ENCODE measurements at regions of chr4 and their contacts with region 1.

Region 1: GRCh38 chr4:39527273-39528060 is at the start of gene UGDH:
- DNase-seq: peak; percentile 73 to 96 (median 89)
- ATAC-seq: peak; percentile 98
- H3K4me3 ChIP-seq: peak within 1 kb of the TSS; percentile 98
- H3K4me3 Mint-ChIP-seq: peak within 1 kb of the TSS; percentile 98
- H3K27ac ChIP-seq: peak within 1 kb of the TSS; percentile 52 to 65
- H3K27ac Mint-ChIP-seq: peak within 1 kb of the TSS; percentile 88
- H3K4me1 ChIP-seq: peaks cover 22% of the 10 kb centered on the region
- H3K4me1 Mint-ChIP-seq: peaks cover 22% of the 10 kb centered on the region
- H3K27me3 ChIP-seq: no peaks in the 10 kb centered on the region
- H3K27me3 Mint-ChIP-seq: no peaks in the 10 kb centered on the region
- CTCF ChIP-seq: no peak
- total RNA-seq, gene UGDH: 3.5 to 3.7 TPM

Region 2: DNA sequence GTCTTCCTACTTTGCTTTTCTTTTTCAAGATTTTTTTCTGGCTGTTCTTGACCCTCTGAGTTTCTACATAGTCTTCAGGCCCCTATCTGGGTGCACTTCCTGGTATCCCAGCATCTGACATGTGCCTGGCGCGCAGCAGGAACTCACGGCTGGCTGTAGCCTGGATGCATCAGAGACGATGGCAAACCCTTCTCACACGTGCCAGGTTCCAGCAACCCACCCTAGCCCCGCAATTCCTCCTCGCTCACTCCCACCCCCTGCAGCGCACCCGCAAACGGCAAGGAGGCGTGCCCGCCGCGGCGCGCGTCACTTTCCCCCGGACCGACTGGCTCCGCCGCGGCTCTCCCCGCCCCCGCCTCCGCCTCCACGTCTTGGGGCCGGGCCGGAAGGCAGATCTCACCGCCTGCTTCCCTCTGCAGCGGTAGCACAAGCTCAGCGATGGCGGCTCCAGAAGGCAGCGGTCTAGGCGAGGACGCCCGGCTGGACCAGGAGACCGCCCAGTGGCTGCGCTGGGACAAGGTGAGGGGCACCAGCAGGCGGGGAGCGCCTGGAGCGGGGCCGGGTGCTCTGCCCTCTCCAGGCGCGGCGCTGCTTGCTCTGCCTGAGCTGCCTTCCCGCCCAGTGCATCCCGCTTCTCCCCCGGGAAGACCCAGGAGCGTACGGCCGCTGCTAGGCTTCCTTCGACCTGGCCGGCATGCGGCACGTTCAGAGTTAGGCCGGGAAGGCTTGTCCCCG is 1701.0 kb before region 1 on chr4 and contains the start of gene PGM2:
- CTCF ChIA-PET with region 1: no interaction called
- POLR2A ChIA-PET with region 1: no interaction called
- intact Hi-C with region 1: loop called in 1 of 2 experiments (anchors 5 kb)
- DNase-seq: peak; percentile 79 to 94 (median 88)
- ATAC-seq: peak; percentile 98
- H3K4me3 ChIP-seq: peak within 1 kb of the TSS; percentile 98
- H3K4me3 Mint-ChIP-seq: peak within 1 kb of the TSS; percentile 91
- H3K27ac ChIP-seq: peak within 1 kb of the TSS; percentile 35 to 63
- H3K27ac Mint-ChIP-seq: peak within 1 kb of the TSS; percentile 91
- H3K4me1 ChIP-seq: peaks cover 27% of the 10 kb centered on the region
- H3K4me1 Mint-ChIP-seq: peaks cover 73% of the 10 kb centered on the region
- H3K27me3 ChIP-seq: no peaks in the 10 kb centered on the region
- H3K27me3 Mint-ChIP-seq: no peaks in the 10 kb centered on the region
- CTCF ChIP-seq: no peak
- total RNA-seq, gene PGM2: 10.7 to 11.8 TPM

Region 3: GRCh38 chr4:39181905-39182638 is 345.4 kb before region 1 on chr4 and contains the start of gene WDR19:
- CTCF ChIA-PET with region 1: no interaction called
- POLR2A ChIA-PET with region 1: no interaction called
- intact Hi-C with region 1: loop called in 1 of 2 experiments (anchors 5 kb)
- DNase-seq: peak; percentile 95 to 100 (median 98)
- ATAC-seq: peak; percentile 93
- H3K4me3 ChIP-seq: peak within 1 kb of the TSS; percentile 94
- H3K4me3 Mint-ChIP-seq: no peak within 1 kb of the TSS
- H3K27ac ChIP-seq: peak within 1 kb of the TSS; percentile 21 to 53
- H3K27ac Mint-ChIP-seq: no peak within 1 kb of the TSS
- H3K4me1 ChIP-seq: peaks cover 16% of the 10 kb centered on the region
- H3K4me1 Mint-ChIP-seq: peaks cover 9% of the 10 kb centered on the region
- H3K27me3 ChIP-seq: no peaks in the 10 kb centered on the region
- H3K27me3 Mint-ChIP-seq: peaks cover 3% of the 10 kb centered on the region
- CTCF ChIP-seq: peak; percentile 61
- total RNA-seq, gene WDR19: 14.5 to 16.7 TPM

Region 4: GRCh38 chr4:39365830-39366771 is 161.4 kb before region 1 on chr4 and contains the start of gene RFC1:
- CTCF ChIA-PET with region 1: no interaction called
- POLR2A ChIA-PET with region 1: no interaction called
- intact Hi-C with region 1: loop called in 1 of 2 experiments (anchors 10 kb)
- DNase-seq: peak; percentile 85 to 97 (median 91)
- ATAC-seq: peak; percentile 95
- H3K4me3 ChIP-seq: peak within 1 kb of the TSS; percentile 98
- H3K4me3 Mint-ChIP-seq: peak within 1 kb of the TSS; percentile 93
- H3K27ac ChIP-seq: peak within 1 kb of the TSS; percentile 49 to 81
- H3K27ac Mint-ChIP-seq: peak within 1 kb of the TSS; percentile 91
- H3K4me1 ChIP-seq: peaks cover 30% of the 10 kb centered on the region
- H3K4me1 Mint-ChIP-seq: peaks cover 37% of the 10 kb centered on the region
- H3K27me3 ChIP-seq: no peaks in the 10 kb centered on the region
- H3K27me3 Mint-ChIP-seq: no peaks in the 10 kb centered on the region
- CTCF ChIP-seq: no peak
- total RNA-seq, gene RFC1: 97.0 to 104 TPM

Region 5: DNA sequence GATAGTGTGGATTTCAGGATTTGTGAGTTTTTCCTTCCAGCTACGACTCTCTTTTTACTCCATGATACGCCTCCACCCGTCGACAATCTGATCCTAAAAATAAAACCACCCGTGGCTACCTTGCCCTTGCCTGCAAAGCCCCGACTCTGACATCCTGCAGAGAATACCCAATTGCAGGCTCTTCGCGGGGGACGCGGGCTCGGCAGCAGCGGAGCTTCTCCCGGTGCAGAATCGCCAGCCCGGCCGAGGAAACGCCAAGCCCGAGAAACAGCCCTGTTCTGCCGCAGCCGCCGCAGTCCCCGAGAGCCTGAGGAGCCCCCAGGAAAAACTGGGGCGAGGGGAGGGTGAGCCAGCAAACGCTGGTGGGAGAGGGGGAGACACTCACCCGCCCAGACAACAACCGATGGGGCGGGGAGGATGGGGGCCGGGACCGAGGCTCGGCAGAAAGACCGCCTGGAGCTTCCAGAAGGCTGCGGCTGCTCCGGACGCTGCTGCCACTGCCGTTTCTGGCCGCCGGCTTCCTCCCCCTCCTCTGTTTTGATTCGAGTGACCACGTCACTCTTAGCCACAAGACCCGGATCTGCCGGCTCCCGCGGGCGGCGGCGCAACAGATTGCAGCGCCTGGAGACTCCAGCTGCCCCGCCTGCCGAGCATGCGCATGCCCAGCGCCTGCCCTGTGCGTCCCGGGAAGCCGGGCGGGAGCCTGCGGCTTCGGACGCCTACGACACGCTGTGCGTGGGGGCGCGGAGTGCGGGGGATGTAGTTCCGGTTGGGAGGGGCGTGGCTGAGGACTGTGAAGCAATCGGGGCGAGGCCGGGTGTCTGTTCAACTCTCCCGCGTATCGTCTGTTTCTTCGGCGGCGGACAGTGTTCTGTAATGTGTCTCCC is 111.1 kb after region 1 on chr4 and contains the start of gene SMIM14:
- CTCF ChIA-PET with region 1: interaction called, 4 read pairs
- POLR2A ChIA-PET with region 1: interaction called, 42 read pairs
- intact Hi-C with region 1: loop called (anchors 1 to 2 kb)
- DNase-seq: peak; percentile 65 to 95 (median 84)
- ATAC-seq: peak; percentile 79
- H3K4me3 ChIP-seq: peak within 1 kb of the TSS; percentile 96
- H3K4me3 Mint-ChIP-seq: peak within 1 kb of the TSS; percentile 88
- H3K27ac ChIP-seq: peak within 1 kb of the TSS; percentile 78 to 90
- H3K27ac Mint-ChIP-seq: peak within 1 kb of the TSS; percentile 85
- H3K4me1 ChIP-seq: peaks cover 25% of the 10 kb centered on the region
- H3K4me1 Mint-ChIP-seq: peaks cover 50% of the 10 kb centered on the region
- H3K27me3 ChIP-seq: no peaks in the 10 kb centered on the region
- H3K27me3 Mint-ChIP-seq: no peaks in the 10 kb centered on the region
- CTCF ChIP-seq: no peak
- total RNA-seq, gene SMIM14: 2.0 to 3.1 TPM

Region 6: GRCh38 chr4:39977489-39978377 is 450.3 kb after region 1 on chr4 and contains the start of gene PDS5A:
- CTCF ChIA-PET with region 1: no interaction called
- POLR2A ChIA-PET with region 1: interaction called, 3 read pairs
- intact Hi-C with region 1: loop called in 1 of 2 experiments (anchors 5 kb)
- DNase-seq: peak; percentile 76 to 96 (median 86)
- ATAC-seq: peak; percentile 85
- H3K4me3 ChIP-seq: peak within 1 kb of the TSS; percentile 90
- H3K4me3 Mint-ChIP-seq: peak within 1 kb of the TSS; percentile 86
- H3K27ac ChIP-seq: peak within 1 kb of the TSS; percentile 78 to 92
- H3K27ac Mint-ChIP-seq: peak within 1 kb of the TSS; percentile 93
- H3K4me1 ChIP-seq: peaks cover 36% of the 10 kb centered on the region
- H3K4me1 Mint-ChIP-seq: peaks cover 34% of the 10 kb centered on the region
- H3K27me3 ChIP-seq: no peaks in the 10 kb centered on the region
- H3K27me3 Mint-ChIP-seq: no peaks in the 10 kb centered on the region
- CTCF ChIP-seq: peak; percentile 73
- total RNA-seq, gene PDS5A: 80.0 to 80.6 TPM

Measured in CD4-positive, alpha-beta T cell (primary cell).